Vagina (tissue), 2 donors: ENCODE measurements at regions of chr6 and their contacts with region 1.

Region 1: DNA sequence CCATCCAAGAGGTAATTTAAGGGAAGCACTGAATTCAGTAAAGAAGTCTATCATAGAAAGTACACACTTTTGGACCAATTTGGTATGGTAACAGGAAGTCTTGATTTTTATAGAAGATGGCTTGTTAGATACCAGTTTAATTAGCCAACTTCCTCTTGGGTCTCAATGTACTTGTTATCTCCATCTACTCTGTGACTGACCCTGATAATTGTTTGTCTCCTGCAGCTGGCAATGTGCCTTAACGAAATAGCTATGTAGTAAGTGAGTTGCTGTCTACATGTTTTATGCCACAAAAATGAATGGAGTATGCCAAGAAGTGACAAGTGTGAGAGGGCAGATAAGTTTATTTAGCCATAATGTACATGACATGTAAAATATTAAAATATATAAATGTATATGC is 410.5 kb upstream of the MAN1A1 start:
- DNase-seq: no peak
- H3K4me3 ChIP-seq: no peak overlapping the region
- H3K27ac ChIP-seq: no peak overlapping the region
- H3K4me1 ChIP-seq: no peaks in the 10 kb centered on the region
- H3K27me3 ChIP-seq: no peaks in the 10 kb centered on the region
- CTCF ChIP-seq: no peak
- POLR2A ChIP-seq: no peak

Region 2: GRCh38 chr6:119742188-119742803 is 17.8 kb before region 1 on chr6:
- intact Hi-C with region 1: loop called (anchors 2 kb)
- DNase-seq: no peak
- H3K4me3 ChIP-seq: no peak overlapping the region
- H3K27ac ChIP-seq: no peak overlapping the region
- H3K4me1 ChIP-seq: no peaks in the 10 kb centered on the region
- H3K27me3 ChIP-seq: no peaks in the 10 kb centered on the region
- CTCF ChIP-seq: peak in 1 of 3 experiments; percentile 33
- POLR2A ChIP-seq: no peak